ENCODE measurements at regions of chr20 and their contacts with region 1.

Region 1: GRCh38 chr20:59785986-59786795 is 147.2 kb downstream of the SYCP2 start:
- DNase-seq: no peak
- H3K4me3 ChIP-seq: no peak overlapping the region
- H3K27ac ChIP-seq: no peak overlapping the region
- H3K4me1 ChIP-seq: no peaks in the 10 kb centered on the region
- H3K27me3 ChIP-seq: no peaks in the 10 kb centered on the region
- CTCF ChIP-seq: no peak
- EP300 ChIP-seq: no peak
- POLR2A ChIP-seq: no peak

Region 2: GRCh38 chr20:59850018-59850641 is 63.9 kb after region 1 on chr20:
- in situ Hi-C with region 1: loop called in 2 of 4 experiments (anchors 5 kb)
- intact Hi-C with region 1: no loop called
- DNase-seq: no peak
- H3K4me3 ChIP-seq: no peak overlapping the region
- H3K27ac ChIP-seq: no peak overlapping the region
- H3K4me1 ChIP-seq: no peaks in the 10 kb centered on the region
- H3K27me3 ChIP-seq: no peaks in the 10 kb centered on the region
- CTCF ChIP-seq: peak; percentile 69 to 82 (median 77)
- EP300 ChIP-seq: no peak
- POLR2A ChIP-seq: no peak

Region 3: GRCh38 chr20:59891581-59891980 is 105.4 kb after region 1 on chr20:
- in situ Hi-C with region 1: no loop called
- intact Hi-C with region 1: no loop called
- DNase-seq: no peak
- H3K4me3 ChIP-seq: no peak overlapping the region
- H3K27ac ChIP-seq: no peak overlapping the region
- H3K4me1 ChIP-seq: no peaks in the 10 kb centered on the region
- H3K27me3 ChIP-seq: no peaks in the 10 kb centered on the region
- CTCF ChIP-seq: no peak
- EP300 ChIP-seq: no peak
- POLR2A ChIP-seq: no peak

Region 4: DNA sequence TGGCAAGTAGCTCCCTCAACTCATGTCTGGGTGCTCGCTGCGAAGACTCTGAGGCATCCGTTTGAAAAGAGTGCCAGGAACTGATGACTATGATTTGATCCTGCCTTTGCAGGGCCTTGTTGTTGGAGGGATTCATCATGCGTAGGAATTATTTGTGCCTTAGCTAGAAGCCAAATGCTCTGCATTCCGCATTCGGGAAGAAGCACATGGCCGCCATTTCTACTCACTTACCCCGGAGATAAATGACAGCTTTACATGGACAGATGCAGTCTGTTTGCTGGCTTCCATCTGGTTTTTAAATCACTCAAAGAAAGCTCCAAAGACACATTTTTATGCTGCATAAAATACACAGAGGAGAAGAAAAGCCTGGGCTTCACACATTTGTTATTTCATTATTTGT is 1102.6 kb after region 1 on chr20:
- in situ Hi-C with region 1: no loop called
- intact Hi-C with region 1: no loop called
- DNase-seq: no peak
- H3K4me3 ChIP-seq: no peak overlapping the region
- H3K27ac ChIP-seq: no peak overlapping the region
- H3K4me1 ChIP-seq: no peaks in the 10 kb centered on the region
- H3K27me3 ChIP-seq: no peaks in the 10 kb centered on the region
- CTCF ChIP-seq: no peak
- EP300 ChIP-seq: no peak
- POLR2A ChIP-seq: no peak

Measured in transverse colon (tissue), 4 donors.